Activated T-helper 1 cell treated with anti-CD3 and anti-CD28 coated beads, Interleukin-12 subunit alpha, Interleukin-12 subunit beta, Interleukin-2, Interleukin-4 antibody, amounts not matched to agents 30 ng/mL and 10 ng/mL and 1 ng/mL, durations not matched to agents 14 hours and 24 hours and 36 hours (primary cell): ENCODE measurements at regions of chr17 and their contacts with region 1.

Region 1: GRCh38 chr17:80791758-80792284 is 199.8 kb upstream of the CHMP6 start:
- DNase-seq: peak; percentile 49
- H3K4me3 Mint-ChIP-seq: peak overlapping the region; percentile 79
- H3K27ac Mint-ChIP-seq: peak overlapping the region; percentile 99
- H3K4me1 Mint-ChIP-seq: peaks cover 91% of the 10 kb centered on the region
- H3K27me3 Mint-ChIP-seq: no peaks in the 10 kb centered on the region

Region 2: GRCh38 chr17:80605326-80606066 is 186.3 kb before region 1 on chr17:
- intact Hi-C with region 1: loop called (anchors 5 kb)
- DNase-seq: peak; percentile 31
- H3K4me3 Mint-ChIP-seq: no peak overlapping the region
- H3K27ac Mint-ChIP-seq: peak overlapping the region; percentile 35
- H3K4me1 Mint-ChIP-seq: peaks cover 66% of the 10 kb centered on the region
- H3K27me3 Mint-ChIP-seq: peaks cover 2% of the 10 kb centered on the region

Region 3: GRCh38 chr17:80656590-80656989 is 135.2 kb before region 1 on chr17:
- intact Hi-C with region 1: no loop called
- DNase-seq: no peak
- H3K4me3 Mint-ChIP-seq: no peak overlapping the region
- H3K27ac Mint-ChIP-seq: no peak overlapping the region
- H3K4me1 Mint-ChIP-seq: peaks cover 29% of the 10 kb centered on the region
- H3K27me3 Mint-ChIP-seq: no peaks in the 10 kb centered on the region

Region 4: DNA sequence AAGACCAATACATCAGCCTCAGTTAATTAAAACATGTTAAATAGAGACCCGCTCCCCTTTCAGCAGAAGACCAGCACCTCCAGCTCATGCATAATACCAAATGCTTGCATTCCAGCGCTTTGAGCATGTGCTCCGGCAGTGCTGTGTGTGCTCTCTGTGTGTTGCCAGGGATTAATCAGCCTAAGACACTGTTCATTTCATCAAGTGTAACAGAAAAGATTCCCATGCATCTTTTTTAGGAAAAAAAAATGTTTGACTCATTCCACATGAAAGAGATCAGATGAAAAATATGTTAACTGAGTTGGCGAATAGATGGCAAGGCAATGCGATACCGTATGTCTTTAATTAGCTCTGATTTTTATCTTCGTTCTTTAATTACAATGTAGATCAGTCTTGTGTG is 59.6 kb before region 1 on chr17:
- intact Hi-C with region 1: loop called (anchors 5 kb)
- DNase-seq: no peak
- H3K4me3 Mint-ChIP-seq: no peak overlapping the region
- H3K27ac Mint-ChIP-seq: no peak overlapping the region
- H3K4me1 Mint-ChIP-seq: peaks cover 70% of the 10 kb centered on the region
- H3K27me3 Mint-ChIP-seq: peaks cover 1% of the 10 kb centered on the region

Region 5: DNA sequence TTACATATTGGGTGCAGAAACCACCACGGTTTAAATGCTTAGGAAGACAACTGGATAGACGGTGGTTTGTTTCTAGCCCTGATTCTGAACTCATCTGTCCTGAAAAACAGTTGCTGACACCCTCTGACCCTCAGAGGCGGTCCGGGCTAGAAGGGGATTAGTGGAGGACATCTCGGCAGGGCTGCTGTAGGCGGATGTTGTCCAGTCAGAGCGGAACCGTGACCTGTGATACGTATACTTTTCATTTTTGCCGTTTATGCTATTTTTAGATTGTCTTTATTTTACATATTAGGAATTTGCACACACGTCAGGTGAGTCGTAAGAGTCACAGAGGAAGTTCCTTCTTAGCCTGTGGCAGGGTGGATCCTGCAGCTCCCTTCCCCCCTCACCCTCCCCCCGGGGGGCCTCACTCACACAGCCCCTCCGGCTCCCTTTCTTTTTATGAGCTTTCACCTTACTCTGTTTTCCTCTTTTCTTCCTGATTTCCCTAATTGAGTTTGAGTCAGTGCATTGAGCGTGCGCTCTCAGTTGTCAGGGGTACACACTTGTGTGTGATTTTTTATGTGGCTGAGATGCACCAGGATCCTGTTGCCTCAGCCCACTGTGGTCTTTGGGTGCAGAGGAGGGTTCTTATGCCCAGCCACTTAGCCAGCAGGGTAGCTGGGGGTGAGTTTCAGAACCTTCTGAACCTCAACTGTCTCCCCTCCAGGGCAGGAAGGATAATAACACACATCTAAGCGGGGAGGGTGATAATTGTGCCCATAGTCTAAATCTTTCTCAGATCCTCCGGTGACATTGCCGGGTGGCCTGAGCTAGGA is 11.2 kb before region 1 on chr17:
- intact Hi-C with region 1: loop called (anchors 1 kb)
- DNase-seq: no peak
- H3K4me3 Mint-ChIP-seq: peak overlapping the region; percentile 75
- H3K27ac Mint-ChIP-seq: peak overlapping the region; percentile 94
- H3K4me1 Mint-ChIP-seq: peaks cover 86% of the 10 kb centered on the region
- H3K27me3 Mint-ChIP-seq: no peaks in the 10 kb centered on the region

Region 6: GRCh38 chr17:80811181-80812105 is 19.6 kb after region 1 on chr17:
- intact Hi-C with region 1: loop called (anchors 2 kb)
- DNase-seq: peak; percentile 27
- H3K4me3 Mint-ChIP-seq: peak overlapping the region; percentile 32
- H3K27ac Mint-ChIP-seq: peak overlapping the region; percentile 88
- H3K4me1 Mint-ChIP-seq: peaks cover 61% of the 10 kb centered on the region
- H3K27me3 Mint-ChIP-seq: no peaks in the 10 kb centered on the region

Region 7: GRCh38 chr17:80876950-80877728 is 85.3 kb after region 1 on chr17:
- intact Hi-C with region 1: loop called (anchors 1 kb)
- DNase-seq: peak; percentile 64
- H3K4me3 Mint-ChIP-seq: peak overlapping the region; percentile 65
- H3K27ac Mint-ChIP-seq: peak overlapping the region; percentile 96
- H3K4me1 Mint-ChIP-seq: peaks cover 55% of the 10 kb centered on the region
- H3K27me3 Mint-ChIP-seq: no peaks in the 10 kb centered on the region